ENCODE measurements at regions of chr1 and their contacts with region 1.

Region 1: DNA sequence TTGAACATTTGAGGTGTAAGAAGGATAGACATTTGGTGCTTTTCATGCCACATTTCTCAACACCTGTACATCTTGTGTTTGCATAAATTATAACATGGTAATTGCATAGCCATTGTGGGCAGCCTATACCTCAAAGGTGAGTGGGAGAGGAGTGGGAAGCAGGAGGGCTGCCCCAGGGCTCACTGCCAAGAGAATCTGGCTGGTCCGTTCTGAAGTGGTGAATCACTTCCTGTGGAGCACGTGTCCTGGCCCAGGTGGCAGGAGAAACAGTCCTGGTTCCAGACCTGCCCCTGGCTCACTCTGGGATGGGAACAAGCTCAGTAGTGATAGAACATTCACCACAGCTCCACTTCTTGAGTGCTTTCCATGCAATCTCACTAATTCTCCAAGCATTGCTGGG is 11.6 kb upstream of the OLFML2B start:
- DNase-seq: peak in 1 of 4 experiments; percentile 16
- ATAC-seq: no peak
- H3K4me3 ChIP-seq: no peak overlapping the region
- H3K27ac ChIP-seq: no peak overlapping the region
- H3K4me1 ChIP-seq: no peaks in the 10 kb centered on the region
- H3K27me3 ChIP-seq: peaks cover 14 to 28% of the 10 kb centered on the region in 2 experiments
- CTCF ChIP-seq: no peak
- EP300 ChIP-seq: no peak
- POLR2A ChIP-seq: no peak
- RAD21 ChIP-seq: no peak

Region 2: DNA sequence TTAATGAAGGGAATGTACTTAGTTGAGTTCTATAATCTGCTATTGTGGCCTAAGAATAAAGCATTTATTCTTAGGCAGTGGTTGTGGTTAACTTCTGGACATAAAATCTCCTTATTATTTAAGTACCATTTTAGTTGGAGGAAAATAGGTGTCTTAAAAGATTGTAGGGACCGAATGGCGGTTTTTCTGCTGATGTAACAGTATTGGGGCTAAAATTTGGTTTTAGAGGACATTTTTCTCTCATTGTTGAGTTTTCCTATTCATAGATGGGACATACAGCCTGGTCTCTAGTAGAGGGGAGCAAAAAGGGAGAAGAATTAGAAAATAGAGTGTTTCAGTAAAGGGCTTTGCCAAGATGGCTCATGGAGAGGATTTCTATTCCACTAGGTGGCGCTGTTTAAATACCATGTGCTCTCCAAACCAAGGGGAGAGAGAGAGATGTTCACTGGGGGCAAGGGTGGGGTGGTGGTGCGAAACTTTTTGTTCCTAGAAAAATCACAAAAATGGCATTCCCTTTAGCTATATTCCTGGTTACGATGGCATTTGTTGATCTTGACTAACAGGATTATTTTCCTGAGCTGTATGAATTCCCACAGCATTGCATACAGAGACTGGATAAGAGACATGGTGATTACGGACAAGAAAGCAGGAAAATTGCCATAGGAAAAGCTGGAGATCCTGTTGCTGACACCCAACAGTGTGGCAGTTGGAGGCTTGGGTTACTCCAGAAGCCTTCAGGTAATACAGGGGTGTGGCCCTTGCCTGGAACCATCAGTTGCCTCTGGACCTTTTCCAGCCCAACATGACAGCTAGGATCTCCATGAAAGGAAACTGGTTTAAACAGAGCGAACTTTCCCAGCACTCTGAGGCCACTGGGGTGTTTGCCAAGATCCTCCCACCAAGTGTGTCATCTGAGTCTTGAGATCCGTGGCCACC is 548.2 kb before region 1 on chr1:
- CTCF ChIA-PET with region 1: no interaction called
- POLR2A ChIA-PET with region 1: no interaction called
- in situ Hi-C with region 1: no loop called
- intact Hi-C with region 1: loop called (anchors 10 kb)
- DNase-seq: peak; percentile 75 to 88 (median 79)
- ATAC-seq: peak; percentile 93
- H3K4me3 ChIP-seq: peak overlapping the region; percentile 9; the same call in 1 of the 2 replicates
- H3K27ac ChIP-seq: peak overlapping the region; percentile 68
- H3K4me1 ChIP-seq: peaks cover 0 to 34% of the 10 kb centered on the region in 2 experiments
- H3K27me3 ChIP-seq: no peaks in the 10 kb centered on the region
- CTCF ChIP-seq: peak; percentile 72 to 93 (median 82)
- EP300 ChIP-seq: 0 out of 2 replicates have a peak, but pooled peaks have one; percentile 10
- POLR2A ChIP-seq: no peak
- RAD21 ChIP-seq: peak; percentile 91 to 97

Region 3: DNA sequence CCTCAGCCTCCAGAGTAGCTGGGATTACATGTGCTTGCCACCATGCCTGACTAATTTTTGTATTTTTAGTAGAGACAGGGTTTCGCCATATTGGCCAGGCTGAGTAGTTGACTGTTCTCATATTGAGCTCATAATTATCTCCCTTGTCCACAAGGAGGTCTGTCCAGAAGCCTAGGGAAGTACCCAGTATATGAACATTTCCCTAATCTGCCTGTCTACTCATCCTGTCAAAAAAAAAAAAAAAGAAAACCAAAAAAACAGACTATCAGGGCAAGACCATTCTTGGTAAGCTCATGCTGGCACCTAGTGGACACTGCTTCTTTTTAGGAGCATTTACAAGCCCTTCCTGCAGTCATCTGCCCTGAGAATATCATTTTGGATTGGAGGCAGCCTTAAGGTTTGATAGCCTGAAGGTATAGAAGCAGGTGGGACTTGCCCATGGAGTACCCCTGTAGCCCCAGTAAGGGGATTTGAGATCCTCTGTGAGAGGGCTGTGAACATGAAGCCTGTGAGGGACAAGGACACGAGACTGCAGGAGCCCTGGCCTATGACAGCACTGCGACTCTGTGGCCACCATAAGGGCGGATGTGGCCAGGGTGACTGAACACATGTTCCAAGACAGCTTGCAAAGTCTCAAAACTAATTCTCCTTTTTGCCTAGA is 296.5 kb before region 1 on chr1:
- CTCF ChIA-PET with region 1: interaction called, 4 read pairs
- POLR2A ChIA-PET with region 1: no interaction called
- in situ Hi-C with region 1: no loop called
- intact Hi-C with region 1: loop called (anchors 5 kb)
- DNase-seq: peak; percentile 38 to 88 (median 58)
- ATAC-seq: peak; percentile 94
- H3K4me3 ChIP-seq: no peak overlapping the region
- H3K27ac ChIP-seq: no peak overlapping the region; the same call in 2 of the 3 replicates
- H3K4me1 ChIP-seq: peaks cover 12 to 28% of the 10 kb centered on the region in 2 experiments; a peak in 4 of 5 replicates
- H3K27me3 ChIP-seq: no peaks in the 10 kb centered on the region
- CTCF ChIP-seq: peak; percentile 79 to 95 (median 88)
- EP300 ChIP-seq: peak; percentile 48; the same call in 1 of the 2 replicates
- POLR2A ChIP-seq: no peak
- RAD21 ChIP-seq: peak; percentile 94 to 95

Region 4: DNA sequence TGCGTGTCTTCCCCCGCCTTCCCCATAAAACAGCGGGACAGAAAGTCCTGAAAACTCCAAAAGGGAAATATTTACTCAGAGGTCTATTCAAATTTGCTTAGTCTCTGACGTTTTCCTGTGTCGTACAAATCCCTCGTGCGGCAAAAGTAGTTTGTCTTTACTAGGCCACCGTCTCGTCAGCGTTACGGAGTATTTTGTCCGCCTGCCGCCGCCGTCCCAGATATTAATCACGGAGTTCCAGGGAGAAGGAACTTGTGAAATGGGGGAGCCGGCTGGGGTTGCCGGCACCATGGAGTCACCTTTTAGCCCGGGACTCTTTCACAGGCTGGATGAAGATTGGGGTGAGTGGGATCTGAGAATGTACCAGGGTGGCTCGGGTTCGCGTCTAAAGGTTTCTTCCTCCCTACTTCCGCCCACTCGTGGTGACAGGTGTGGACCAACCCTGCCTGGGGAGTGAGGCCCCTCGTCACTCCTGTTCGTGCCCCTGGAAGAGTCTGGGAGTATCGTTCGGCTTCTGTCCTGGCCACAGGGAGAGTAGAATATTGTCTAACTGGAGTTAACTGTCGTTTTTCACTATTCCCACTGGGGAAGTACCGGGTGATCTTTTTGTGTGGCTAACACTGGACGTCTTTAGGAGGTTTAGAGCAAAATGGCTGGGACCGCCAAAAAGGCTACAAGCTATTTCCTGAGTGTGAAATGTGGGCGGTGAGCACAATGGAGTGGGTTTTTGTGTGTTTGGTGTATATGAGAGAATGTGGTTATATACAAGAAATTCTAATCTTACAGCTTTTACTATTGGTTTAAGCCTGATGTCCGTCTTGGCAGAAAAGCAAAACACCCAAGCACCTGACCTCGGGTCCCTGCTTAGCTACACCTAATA is 268.9 kb before region 1 on chr1 and contains the start of gene ATF6:
- CTCF ChIA-PET with region 1: no interaction called
- POLR2A ChIA-PET with region 1: no interaction called
- in situ Hi-C with region 1: no loop called
- intact Hi-C with region 1: loop called (anchors 10 kb)
- DNase-seq: peak; percentile 73 to 93 (median 78)
- ATAC-seq: peak; percentile 79
- H3K4me3 ChIP-seq: peak within 1 kb of the TSS; percentile 73
- H3K27ac ChIP-seq: peak within 1 kb of the TSS; percentile 89
- H3K4me1 ChIP-seq: peaks cover 8 to 15% of the 10 kb centered on the region in 2 experiments; a peak in 4 of 5 replicates
- H3K27me3 ChIP-seq: no peaks in the 10 kb centered on the region
- CTCF ChIP-seq: peak in 1 of 3 experiments; percentile 26; a peak in 1 of 6 replicates
- EP300 ChIP-seq: peak; percentile 64; the same call in 1 of the 2 replicates
- POLR2A ChIP-seq: peak; percentile 88
- RAD21 ChIP-seq: no peak
- polyA plus RNA-seq, gene ATF6: 11.7 to 15.1 TPM

Region 5: GRCh38 chr1:161792740-161793139 is 242.5 kb before region 1 on chr1:
- CTCF ChIA-PET with region 1: interaction called, 14 read pairs
- POLR2A ChIA-PET with region 1: interaction called, 7 read pairs
- in situ Hi-C with region 1: loop called (anchors 10 kb)
- intact Hi-C with region 1: loop called (anchors 1 kb)
- DNase-seq: peak; percentile 32 to 52 (median 50)
- ATAC-seq: peak; percentile 87
- H3K4me3 ChIP-seq: no peak overlapping the region
- H3K27ac ChIP-seq: no peak overlapping the region
- H3K4me1 ChIP-seq: no peaks in the 10 kb centered on the region; a peak in 1 of 5 replicates
- H3K27me3 ChIP-seq: no peaks in the 10 kb centered on the region
- CTCF ChIP-seq: peak in 2 of 3 experiments; percentile 46 to 67; a peak in 4 of 6 replicates
- EP300 ChIP-seq: no peak
- POLR2A ChIP-seq: no peak
- RAD21 ChIP-seq: peak; percentile 63 to 64

Region 6: DNA sequence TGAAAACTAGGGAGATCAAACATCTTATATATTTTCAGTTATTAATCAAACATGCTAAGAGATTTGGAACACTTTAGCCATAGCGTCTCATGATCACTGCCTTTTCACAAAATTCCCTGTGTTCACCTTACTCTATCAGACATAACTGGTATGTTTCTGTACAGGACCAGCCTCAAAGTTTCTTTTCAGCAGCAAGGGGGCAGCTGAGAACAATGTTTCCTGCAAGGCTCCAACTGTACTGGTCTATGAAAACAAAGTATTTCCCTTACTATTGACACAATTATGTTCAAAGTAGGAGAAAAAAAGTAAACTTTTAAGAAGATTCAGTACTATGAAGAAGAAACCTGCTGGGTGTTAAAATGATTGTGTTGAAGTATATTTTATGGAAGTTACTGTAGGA is 170.7 kb before region 1 on chr1:
- CTCF ChIA-PET with region 1: interaction called, 20 read pairs
- POLR2A ChIA-PET with region 1: interaction called, 3 read pairs
- in situ Hi-C with region 1: no loop called
- intact Hi-C with region 1: no loop called
- DNase-seq: no peak
- ATAC-seq: peak; percentile 66; the same call in 2 of the 3 replicates
- H3K4me3 ChIP-seq: no peak overlapping the region
- H3K27ac ChIP-seq: no peak overlapping the region
- H3K4me1 ChIP-seq: no peaks in the 10 kb centered on the region
- H3K27me3 ChIP-seq: no peaks in the 10 kb centered on the region
- CTCF ChIP-seq: peak in 1 of 3 experiments; percentile 46; a peak in 2 of 6 replicates
- EP300 ChIP-seq: no peak
- POLR2A ChIP-seq: no peak
- RAD21 ChIP-seq: peak; percentile 31 to 34; a peak in 3 of 4 replicates

Measured in K562 (cell line).